Endothelial cell of umbilical vein (primary cell): ENCODE measurements at regions of chr7 and their contacts with region 1.

Region 1: DNA sequence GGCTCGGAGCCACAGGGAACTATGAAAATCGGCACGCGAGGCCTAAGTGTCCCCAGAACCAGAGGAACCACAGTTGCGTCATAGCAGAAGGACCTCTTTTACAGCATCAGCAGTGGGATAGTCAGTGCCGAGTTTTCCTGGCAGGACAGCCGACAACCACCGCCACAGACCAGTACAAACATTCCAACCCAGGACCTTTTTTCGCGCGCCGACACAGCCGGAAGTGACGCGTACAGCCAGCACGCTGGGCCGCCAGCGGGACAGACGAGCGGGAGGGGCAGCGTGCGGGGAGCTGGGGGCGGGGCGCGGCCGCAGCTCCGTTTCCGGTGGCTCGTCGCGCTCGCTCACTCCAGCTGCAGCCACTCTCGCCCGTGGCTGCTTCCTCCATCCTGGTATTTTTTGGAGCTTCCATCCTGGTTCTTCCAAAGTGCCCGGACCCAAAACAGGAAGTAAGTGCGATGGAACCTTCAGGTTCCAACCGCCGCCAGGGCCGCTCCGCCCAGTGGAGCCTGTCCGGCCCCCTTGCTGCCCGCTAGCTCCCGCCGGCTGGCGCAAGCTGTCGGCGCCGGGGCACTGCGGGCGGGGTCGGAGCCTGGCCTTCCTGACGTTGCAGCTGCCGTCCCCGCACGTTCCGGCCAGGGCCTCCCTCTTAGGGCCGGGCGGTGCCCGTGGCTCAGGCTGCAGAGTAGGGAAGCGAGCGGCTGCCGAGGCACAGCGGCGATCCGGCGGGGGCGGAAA is at the start of gene DMTF1:
- DNase-seq: peak; percentile 96
- H3K4me3 ChIP-seq: peak within 1 kb of the TSS; percentile 96 to 100 (median 100)
- H3K27ac ChIP-seq: peak within 1 kb of the TSS; percentile 84
- H3K4me1 ChIP-seq: peaks cover 40% of the 10 kb centered on the region
- H3K27me3 ChIP-seq: no peaks in the 10 kb centered on the region
- CTCF ChIP-seq: no peak
- POLR2A ChIP-seq: peak; percentile 87
- total RNA-seq, gene DMTF1: 86.9 and 100.0 TPM in 2 replicates

Region 2: DNA sequence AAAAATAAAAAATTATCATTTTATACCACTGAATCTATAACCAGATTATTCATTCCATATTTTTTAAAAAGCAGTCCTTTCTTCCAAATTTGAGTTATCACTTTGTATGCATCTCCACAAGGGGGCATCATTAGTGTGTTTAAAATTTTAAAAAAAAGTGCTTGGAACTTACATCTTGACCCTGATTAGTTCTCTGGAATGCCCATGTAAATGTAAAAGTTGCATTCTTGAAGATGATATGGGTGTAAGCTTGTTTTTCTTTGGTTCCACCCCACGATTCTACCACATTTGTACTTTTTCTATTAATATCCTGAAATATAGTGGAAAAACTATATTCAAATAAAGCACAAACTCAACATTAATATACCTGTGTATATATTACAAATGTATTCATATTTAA is 237.7 kb before region 1 on chr7:
- CTCF ChIA-PET with region 1: interaction called, 89 read pairs
- POLR2A ChIA-PET with region 1: no interaction called
- dilution Hi-C with region 1: no loop called
- intact Hi-C with region 1: loop called (anchors 1 kb)
- DNase-seq: peak; percentile 30
- H3K4me3 ChIP-seq: no peak overlapping the region
- H3K27ac ChIP-seq: no peak overlapping the region
- H3K4me1 ChIP-seq: no peaks in the 10 kb centered on the region
- H3K27me3 ChIP-seq: no peaks in the 10 kb centered on the region
- CTCF ChIP-seq: peak; percentile 28 to 39
- POLR2A ChIP-seq: no peak

Region 3: DNA sequence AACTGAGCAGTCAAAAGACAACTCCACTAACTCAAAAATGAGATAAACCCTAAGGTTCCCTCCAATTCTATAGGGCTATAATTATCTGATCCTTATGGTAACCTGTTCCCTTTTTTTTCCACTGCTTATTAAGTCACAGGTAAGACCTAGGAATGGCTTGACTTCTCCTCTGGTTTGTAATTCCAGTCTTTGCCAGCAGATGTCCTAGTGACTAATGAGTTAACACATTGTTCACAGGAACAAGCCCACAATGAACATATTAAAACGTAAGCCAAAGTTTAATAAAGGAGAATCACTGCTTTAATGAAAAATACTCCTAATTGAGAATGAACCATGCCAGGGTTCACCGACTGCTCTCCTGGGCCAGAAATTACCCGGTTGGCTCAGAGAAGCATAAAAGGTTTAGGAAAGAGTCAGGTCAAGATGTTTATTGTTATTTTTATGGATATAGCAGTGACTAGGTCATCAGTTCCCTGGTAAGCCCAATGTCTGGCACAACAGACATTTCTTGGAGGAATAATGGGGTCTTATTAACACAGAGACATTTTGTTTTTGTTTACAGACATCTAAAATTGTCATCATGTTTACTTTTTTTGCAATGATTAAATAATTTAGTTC is 213.0 kb before region 1 on chr7:
- CTCF ChIA-PET with region 1: interaction called, 343 read pairs
- POLR2A ChIA-PET with region 1: no interaction called
- dilution Hi-C with region 1: no loop called
- intact Hi-C with region 1: loop called (anchors 1 kb)
- DNase-seq: peak; percentile 87
- H3K4me3 ChIP-seq: no peak overlapping the region
- H3K27ac ChIP-seq: peak overlapping the region; percentile 24
- H3K4me1 ChIP-seq: no peaks in the 10 kb centered on the region
- H3K27me3 ChIP-seq: no peaks in the 10 kb centered on the region
- CTCF ChIP-seq: peak; percentile 46 to 57
- POLR2A ChIP-seq: no peak

Region 4: DNA sequence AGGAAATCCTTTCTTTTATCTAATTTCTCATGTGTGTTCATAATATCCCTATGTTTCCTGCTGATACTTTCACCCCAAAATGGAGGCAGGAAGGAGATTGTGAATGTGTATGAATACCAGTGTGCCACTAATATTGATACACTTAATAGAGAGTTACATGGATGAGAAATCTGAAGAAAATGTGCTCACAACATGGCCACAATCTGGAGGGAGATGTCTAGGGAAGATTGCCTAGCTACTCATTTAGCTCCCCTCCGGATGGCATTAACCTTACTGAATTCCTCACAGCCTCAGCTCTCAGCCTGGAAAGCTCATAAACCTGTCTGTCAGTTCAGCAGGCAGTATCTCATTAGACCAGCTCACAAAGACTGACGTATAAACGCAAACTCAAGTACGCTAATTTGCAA is 23.4 kb before region 1 on chr7:
- CTCF ChIA-PET with region 1: interaction called, 16 read pairs
- POLR2A ChIA-PET with region 1: no interaction called
- dilution Hi-C with region 1: no loop called
- intact Hi-C with region 1: no loop called
- DNase-seq: peak; percentile 73
- H3K4me3 ChIP-seq: no peak overlapping the region
- H3K27ac ChIP-seq: no peak overlapping the region
- H3K4me1 ChIP-seq: peaks cover 6% of the 10 kb centered on the region
- H3K27me3 ChIP-seq: no peaks in the 10 kb centered on the region
- CTCF ChIP-seq: no peak
- POLR2A ChIP-seq: no peak

Region 5: DNA sequence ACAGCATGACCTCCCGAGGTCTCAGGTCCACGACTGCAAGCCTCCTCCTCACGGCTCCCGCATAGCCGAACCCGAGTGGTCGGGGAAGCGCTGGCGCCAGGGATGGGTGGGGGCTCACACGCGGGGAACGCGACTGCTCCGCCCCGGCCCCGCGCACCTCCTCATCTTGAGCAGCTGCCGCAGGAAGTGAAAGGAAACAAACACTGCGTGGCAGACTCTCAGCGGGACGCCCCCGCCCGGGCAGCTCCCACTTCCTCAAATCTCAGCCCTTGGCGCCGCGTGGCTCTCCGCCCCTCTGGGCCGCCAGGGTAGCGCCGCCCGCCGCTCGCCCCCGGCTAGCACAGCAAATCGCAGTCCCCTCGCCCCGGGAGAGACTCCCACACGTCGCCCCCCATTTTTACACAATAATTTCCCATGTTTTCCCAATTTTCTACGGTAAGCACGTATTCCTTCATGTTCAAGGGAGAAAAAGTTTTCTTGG is 67.3 kb after region 1 on chr7 and contains the start of gene TMEM243:
- CTCF ChIA-PET with region 1: interaction called, 9 read pairs
- POLR2A ChIA-PET with region 1: interaction called, 15 read pairs
- dilution Hi-C with region 1: no loop called
- intact Hi-C with region 1: loop called (anchors 1 kb)
- DNase-seq: peak; percentile 87
- H3K4me3 ChIP-seq: peak within 1 kb of the TSS; percentile 32 to 76 (median 63)
- H3K27ac ChIP-seq: peak within 1 kb of the TSS; percentile 59
- H3K4me1 ChIP-seq: peaks cover 18% of the 10 kb centered on the region
- H3K27me3 ChIP-seq: peaks cover 3 to 13% of the 10 kb centered on the region in 2 experiments
- CTCF ChIP-seq: peak in 1 of 2 donors; percentile 8
- POLR2A ChIP-seq: peak; percentile 35
- total RNA-seq, gene TMEM243: 26.9 and 31.5 TPM in 2 replicates

Region 6: DNA sequence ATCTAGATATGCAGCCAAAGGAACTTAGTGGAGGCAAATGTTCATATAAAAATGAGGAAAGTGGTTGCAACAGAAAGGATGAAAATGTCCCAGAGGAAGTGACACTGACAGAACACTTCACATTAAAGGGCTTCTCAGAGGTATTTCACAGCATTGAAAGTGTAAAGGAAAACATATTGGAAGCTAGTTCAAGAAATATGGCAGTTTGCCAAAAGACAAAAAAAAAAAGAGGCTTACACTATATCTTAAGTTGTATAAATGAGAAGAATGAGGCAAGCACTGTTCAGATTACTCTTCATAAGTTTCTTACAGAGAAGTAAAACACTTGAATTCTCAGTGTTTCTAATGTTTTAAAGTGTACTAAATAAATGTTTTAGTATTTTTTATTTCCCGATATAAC is 496.0 kb after region 1 on chr7:
- CTCF ChIA-PET with region 1: no interaction called
- POLR2A ChIA-PET with region 1: no interaction called
- dilution Hi-C with region 1: no loop called
- intact Hi-C with region 1: loop called (anchors 10 kb)
- DNase-seq: peak; percentile 36
- H3K4me3 ChIP-seq: no peak overlapping the region
- H3K27ac ChIP-seq: no peak overlapping the region
- H3K4me1 ChIP-seq: peaks cover 22% of the 10 kb centered on the region
- H3K27me3 ChIP-seq: no peaks in the 10 kb centered on the region
- CTCF ChIP-seq: no peak
- POLR2A ChIP-seq: no peak

Region 7: GRCh38 chr7:87687653-87688254 is 535.5 kb after region 1 on chr7:
- CTCF ChIA-PET with region 1: no interaction called
- POLR2A ChIA-PET with region 1: no interaction called
- dilution Hi-C with region 1: no loop called
- intact Hi-C with region 1: no loop called
- DNase-seq: no peak
- H3K4me3 ChIP-seq: no peak overlapping the region
- H3K27ac ChIP-seq: no peak overlapping the region
- H3K4me1 ChIP-seq: no peaks in the 10 kb centered on the region
- H3K27me3 ChIP-seq: no peaks in the 10 kb centered on the region
- CTCF ChIP-seq: no peak
- POLR2A ChIP-seq: no peak